ENCODE measurements at regions of chr1 and their contacts with region 1.

Region 1: GRCh38 chr1:52268372-52268771 is 97.6 kb downstream of the CC2D1B start:
- DNase-seq: no peak
- H3K4me3 ChIP-seq: no peak overlapping the region
- H3K27ac ChIP-seq: no peak overlapping the region
- H3K27me3 ChIP-seq: no peaks in the 10 kb centered on the region
- CTCF ChIP-seq: no peak

Region 2: GRCh38 chr1:52127181-52128180 is 140.9 kb before region 1 on chr1:
- intact Hi-C with region 1: no loop called
- DNase-seq: peak in 3 of 10 donors; percentile 16 to 34 (median 19)
- H3K4me3 ChIP-seq: no peak overlapping the region
- H3K27ac ChIP-seq: no peak overlapping the region
- H3K27me3 ChIP-seq: no peaks in the 10 kb centered on the region
- CTCF ChIP-seq: peak; percentile 20 to 84 (median 65)

Region 3: DNA sequence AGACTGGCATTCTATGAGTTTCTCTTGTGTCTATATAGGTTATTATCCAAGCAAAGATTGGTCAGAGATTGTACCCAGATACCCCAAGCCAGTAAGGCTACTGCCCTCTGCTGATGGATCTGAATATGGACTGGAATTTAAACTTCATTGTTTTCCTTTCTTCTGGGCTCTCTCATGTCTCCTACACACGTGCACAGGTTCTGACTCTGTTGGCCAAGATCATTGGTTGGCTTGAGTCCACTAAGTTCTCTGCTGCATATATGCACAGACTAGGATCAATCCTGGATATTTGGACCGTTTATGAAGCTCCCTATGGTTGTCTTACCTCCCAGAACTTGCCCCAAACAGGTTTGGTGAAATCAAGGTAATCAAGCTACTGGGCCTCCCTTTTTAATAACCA is 28.0 kb after region 1 on chr1:
- intact Hi-C with region 1: loop called in 1 of 2 experiments (anchors 2 kb)
- DNase-seq: no peak
- H3K4me3 ChIP-seq: no peak overlapping the region
- H3K27ac ChIP-seq: no peak overlapping the region
- H3K27me3 ChIP-seq: no peaks in the 10 kb centered on the region
- CTCF ChIP-seq: peak; percentile 43 to 80 (median 65)

Measured in dorsolateral prefrontal cortex (tissue), 120 donors.